Mammary epithelial cell (primary cell): ENCODE measurements at regions of chr6 and their contacts with region 1.

Region 1: DNA sequence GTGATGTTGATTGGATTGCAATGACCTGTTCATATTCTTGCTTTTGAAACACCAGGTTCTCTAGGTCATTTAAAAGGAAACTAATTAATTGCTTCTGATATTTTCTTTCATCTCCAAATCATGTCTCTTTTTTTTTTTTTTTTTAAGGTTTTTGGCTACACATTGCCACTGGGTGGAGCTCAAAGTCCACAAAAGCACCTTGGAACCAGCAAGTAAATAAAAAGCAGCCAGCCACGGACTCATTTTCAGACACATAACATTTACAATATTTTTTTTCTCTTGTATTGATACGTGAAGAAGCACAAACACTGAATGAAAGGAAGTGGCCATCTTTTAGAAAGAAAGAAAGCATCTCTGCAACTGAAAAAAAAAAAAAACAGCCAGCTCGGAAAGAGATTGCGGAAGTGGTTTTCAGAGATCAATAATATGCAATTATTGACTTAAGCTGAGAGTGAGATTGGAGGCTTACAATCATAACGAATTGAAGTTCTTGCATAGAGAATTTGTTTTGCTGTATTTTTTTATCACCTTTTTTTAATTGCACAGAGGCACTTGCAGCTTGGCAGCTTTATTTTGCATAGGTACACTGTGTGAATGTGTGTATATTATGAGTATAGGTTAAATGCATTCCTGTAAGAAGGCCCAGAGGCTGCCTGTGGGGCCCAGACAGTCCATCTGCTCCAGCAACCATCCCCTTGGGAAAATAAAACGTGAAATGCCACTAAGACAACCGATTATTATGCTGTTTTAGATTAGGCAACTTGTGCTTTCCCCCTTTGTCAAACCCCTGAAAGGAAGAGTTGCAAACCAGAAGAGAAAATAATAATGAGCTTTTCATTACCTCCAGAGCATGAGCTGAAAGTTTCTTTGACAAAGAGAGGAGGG is 28.2 kb downstream of the CGA start:
- DNase-seq: peak; percentile 39
- H3K4me3 ChIP-seq: peak overlapping the region in 1 of 3 experiments; percentile 25
- H3K27ac ChIP-seq: no peak overlapping the region
- H3K4me1 ChIP-seq: no peaks in the 10 kb centered on the region
- H3K27me3 ChIP-seq: peaks cover 3% of the 10 kb centered on the region
- CTCF ChIP-seq: peak; percentile 40 to 65

Region 2: GRCh38 chr6:87099472-87099871 is 32.8 kb after region 1 on chr6:
- CTCF ChIA-PET with region 1: no interaction called
- dilution Hi-C with region 1: no loop called
- in situ Hi-C with region 1: no loop called
- intact Hi-C with region 1: no loop called
- DNase-seq: no peak
- H3K4me3 ChIP-seq: no peak overlapping the region
- H3K27ac ChIP-seq: no peak overlapping the region
- H3K4me1 ChIP-seq: no peaks in the 10 kb centered on the region
- H3K27me3 ChIP-seq: peaks cover 2% of the 10 kb centered on the region
- CTCF ChIP-seq: no peak

Region 3: DNA sequence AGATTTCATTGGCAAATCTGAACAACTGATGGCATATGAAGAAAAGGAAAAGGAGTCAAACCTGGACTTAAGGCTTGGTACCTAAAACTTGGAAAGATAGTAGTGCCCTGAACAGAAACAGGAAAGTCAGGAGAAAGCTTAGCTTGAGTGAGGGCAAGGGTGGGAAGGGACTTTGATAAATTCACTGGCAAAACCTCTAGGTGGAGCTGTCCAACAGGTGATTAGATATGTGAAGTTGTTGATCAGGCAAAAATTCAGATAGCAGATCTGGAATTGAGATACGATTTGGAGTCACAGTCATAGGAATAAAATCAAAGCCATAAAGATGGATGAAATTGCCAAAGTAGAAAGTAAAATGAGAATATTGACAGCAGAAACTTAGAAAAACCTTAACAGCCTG is 72.5 kb after region 1 on chr6:
- CTCF ChIA-PET with region 1: interaction called, 4 read pairs
- dilution Hi-C with region 1: no loop called
- in situ Hi-C with region 1: no loop called
- intact Hi-C with region 1: loop called (anchors 1 kb)
- DNase-seq: peak; percentile 40
- H3K4me3 ChIP-seq: no peak overlapping the region
- H3K27ac ChIP-seq: no peak overlapping the region
- H3K4me1 ChIP-seq: no peaks in the 10 kb centered on the region
- H3K27me3 ChIP-seq: no peaks in the 10 kb centered on the region
- CTCF ChIP-seq: peak; percentile 70 to 76

Region 4: GRCh38 chr6:87237804-87238203 is 171.1 kb after region 1 on chr6:
- CTCF ChIA-PET with region 1: no interaction called
- dilution Hi-C with region 1: no loop called
- in situ Hi-C with region 1: loop called in 1 of 2 experiments (anchors 10 kb)
- intact Hi-C with region 1: loop called (anchors 5 kb)
- DNase-seq: no peak
- H3K4me3 ChIP-seq: no peak overlapping the region
- H3K27ac ChIP-seq: no peak overlapping the region
- H3K4me1 ChIP-seq: no peaks in the 10 kb centered on the region
- H3K27me3 ChIP-seq: no peaks in the 10 kb centered on the region
- CTCF ChIP-seq: peak; percentile 52 to 72

Region 5: DNA sequence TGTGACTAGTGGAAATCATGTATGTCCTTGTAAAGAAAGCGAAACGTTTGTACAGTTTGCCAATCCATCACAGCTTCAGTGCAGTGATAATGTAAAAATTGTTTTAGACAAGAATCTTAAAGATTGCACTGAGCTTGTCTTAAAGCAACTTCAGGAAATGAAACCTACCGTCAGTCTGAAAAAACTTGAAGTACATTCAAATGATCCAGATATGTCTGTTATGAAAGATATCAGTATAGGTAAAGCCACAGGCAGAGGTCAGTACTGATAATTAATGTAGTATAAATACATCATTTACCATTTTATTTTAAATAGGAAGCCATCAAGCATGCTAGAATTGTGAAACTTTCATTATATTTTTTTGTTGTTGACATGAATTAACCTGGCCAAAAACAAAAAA is 194.8 kb after region 1 on chr6:
- CTCF ChIA-PET with region 1: no interaction called
- dilution Hi-C with region 1: no loop called
- in situ Hi-C with region 1: no loop called
- intact Hi-C with region 1: loop called (anchors 10 kb)
- DNase-seq: no peak
- H3K4me3 ChIP-seq: no peak overlapping the region
- H3K27ac ChIP-seq: no peak overlapping the region
- H3K4me1 ChIP-seq: no peaks in the 10 kb centered on the region
- H3K27me3 ChIP-seq: no peaks in the 10 kb centered on the region
- CTCF ChIP-seq: no peak

Region 6: GRCh38 chr6:88238065-88238464 is 1171.4 kb after region 1 on chr6:
- CTCF ChIA-PET with region 1: no interaction called
- dilution Hi-C with region 1: no loop called
- in situ Hi-C with region 1: no loop called
- intact Hi-C with region 1: loop called (anchors 5 kb)
- DNase-seq: peak; percentile 8
- H3K4me3 ChIP-seq: no peak overlapping the region
- H3K27ac ChIP-seq: no peak overlapping the region
- H3K4me1 ChIP-seq: no peaks in the 10 kb centered on the region
- H3K27me3 ChIP-seq: no peaks in the 10 kb centered on the region
- CTCF ChIP-seq: peak; percentile 36 to 58

Region 7: GRCh38 chr6:88492824-88493223 is 1426.1 kb after region 1 on chr6:
- CTCF ChIA-PET with region 1: no interaction called
- dilution Hi-C with region 1: no loop called
- in situ Hi-C with region 1: no loop called
- intact Hi-C with region 1: loop called (anchors 10 kb)
- DNase-seq: no peak
- H3K4me3 ChIP-seq: no peak overlapping the region
- H3K27ac ChIP-seq: no peak overlapping the region
- H3K4me1 ChIP-seq: no peaks in the 10 kb centered on the region
- H3K27me3 ChIP-seq: no peaks in the 10 kb centered on the region
- CTCF ChIP-seq: peak; percentile 18 to 61